Right ventricle myocardium superior (tissue), 1 donor: ENCODE measurements at regions of chr4 and their contacts with region 1.

Region 1: GRCh38 chr4:105146276-105147015 is at the start of gene TET2:
- DNase-seq: peak; percentile 91
- ATAC-seq: peak; percentile 86
- total RNA-seq, gene TET2: 11.8 TPM

Region 2: DNA sequence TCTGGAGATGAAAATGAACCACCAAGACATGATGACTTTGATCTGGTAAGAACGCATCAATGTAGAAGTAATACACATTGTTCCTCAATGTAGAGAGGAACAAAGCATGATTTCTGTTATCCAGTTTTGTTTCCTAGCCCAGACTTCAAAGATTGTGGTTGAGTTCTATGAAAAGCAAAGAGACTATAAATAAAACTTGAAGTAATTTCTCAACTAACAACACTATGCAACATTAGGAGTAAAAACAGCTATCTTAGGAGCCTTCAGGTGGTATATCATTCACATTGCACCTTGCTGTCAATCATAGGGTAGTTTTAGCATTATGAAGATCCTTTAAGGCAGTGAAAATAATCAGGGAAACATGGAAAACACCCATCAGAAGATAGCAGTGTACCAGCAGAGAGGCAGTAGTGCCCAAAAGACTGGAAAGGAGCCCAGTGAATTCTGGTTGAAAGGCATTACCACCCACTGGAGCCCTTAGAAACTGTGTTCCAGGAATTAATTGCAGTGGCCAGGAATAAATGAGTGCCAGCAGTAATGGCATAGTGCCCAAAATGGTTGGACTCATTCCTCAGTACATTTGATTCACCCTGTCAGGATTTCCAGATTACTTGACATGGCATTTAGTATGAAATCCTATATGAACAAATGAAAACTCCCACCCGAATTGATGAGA is 351.0 kb before region 1 on chr4:
- intact Hi-C with region 1: no loop called
- DNase-seq: no peak
- ATAC-seq: peak; percentile 98

Region 3: GRCh38 chr4:105191621-105192210 is 45.3 kb after region 1 on chr4:
- intact Hi-C with region 1: loop called (anchors 10 kb)
- DNase-seq: no peak
- ATAC-seq: peak; percentile 50

Region 4: DNA sequence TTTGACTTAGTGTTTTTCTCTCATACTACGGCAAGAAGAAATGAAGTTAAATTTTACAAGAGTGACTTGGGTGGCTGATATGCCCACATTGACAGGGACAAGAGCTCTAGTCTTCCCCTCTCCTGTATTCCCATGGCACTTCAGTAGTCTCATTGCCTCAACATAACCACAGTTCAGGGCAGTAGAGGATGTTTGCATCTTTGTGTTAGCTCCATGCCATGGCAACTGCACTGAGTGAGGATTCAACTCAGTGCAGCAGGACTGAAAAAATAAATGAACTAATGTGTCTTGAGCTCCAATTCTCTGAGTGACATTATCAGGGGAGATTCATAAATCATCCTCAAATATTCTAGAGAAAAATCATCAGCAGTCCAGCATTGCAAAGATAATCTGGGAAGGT is 79.1 kb after region 1 on chr4:
- intact Hi-C with region 1: no loop called
- DNase-seq: no peak
- ATAC-seq: no peak

Region 5: GRCh38 chr4:105246712-105247111 is 100.3 kb after region 1 on chr4:
- intact Hi-C with region 1: loop called (anchors 10 kb)
- DNase-seq: no peak
- ATAC-seq: peak; percentile 56

Region 6: GRCh38 chr4:105274504-105274903 is 128.1 kb after region 1 on chr4:
- intact Hi-C with region 1: no loop called
- DNase-seq: no peak
- ATAC-seq: no peak

Region 7: GRCh38 chr4:105471566-105472176 is 325.2 kb after region 1 on chr4:
- intact Hi-C with region 1: loop called (anchors 2 kb)
- DNase-seq: peak; percentile 44
- ATAC-seq: peak; percentile 58

Region 8: GRCh38 chr4:105715692-105716278 is 569.3 kb after region 1 on chr4:
- intact Hi-C with region 1: loop called (anchors 10 kb)
- DNase-seq: no peak
- ATAC-seq: no peak